Dorsolateral prefrontal cortex (tissue), 120 donors: ENCODE measurements at regions of chr15 and their contacts with region 1.

Region 1: GRCh38 chr15:42137431-42138261 is 18.8 kb downstream of the PLA2G4F start:
- DNase-seq: peak in 4 of 10 donors; percentile 5 to 38 (median 14)
- H3K4me3 ChIP-seq: no peak overlapping the region
- H3K27ac ChIP-seq: no peak overlapping the region
- H3K27me3 ChIP-seq: no peaks in the 10 kb centered on the region
- CTCF ChIP-seq: peak; percentile 45 to 79 (median 67)

Region 2: DNA sequence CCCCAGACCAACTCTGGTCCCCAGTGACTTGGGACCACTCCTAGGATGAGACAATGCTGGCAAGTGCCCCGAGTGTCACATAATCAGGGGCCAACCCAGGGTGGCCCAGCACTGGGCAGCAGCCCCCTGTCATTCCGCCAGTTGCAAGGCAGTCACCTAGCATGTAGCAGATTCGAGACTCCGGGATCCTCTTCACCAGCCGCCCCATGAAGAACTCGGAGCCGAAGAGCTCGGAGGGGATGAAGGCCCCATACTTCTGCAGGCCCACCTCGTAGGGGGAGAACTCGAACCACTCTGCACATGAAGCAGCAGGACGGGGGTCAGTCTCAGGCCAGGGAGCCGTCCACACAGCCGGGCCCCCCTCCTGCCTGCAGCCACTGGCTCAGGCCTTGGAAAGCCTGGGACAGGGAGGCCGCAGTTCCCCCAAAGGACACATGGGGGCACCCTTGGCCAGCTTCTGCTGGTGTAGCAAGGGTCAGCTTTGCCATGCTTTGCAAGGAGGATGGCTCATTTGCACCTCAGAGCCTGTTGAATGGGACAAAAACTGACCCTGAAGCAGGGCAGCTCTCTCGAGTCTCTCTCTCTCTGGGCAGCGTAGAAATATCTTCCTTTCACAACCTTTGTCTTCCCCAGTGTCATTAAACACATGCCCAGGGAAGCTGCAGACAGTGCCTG is 148.2 kb before region 1 on chr15:
- intact Hi-C with region 1: loop called in 1 of 2 experiments (anchors 2 kb)
- DNase-seq: peak; percentile 76 to 91 (median 84)
- H3K4me3 ChIP-seq: no peak overlapping the region
- H3K27ac ChIP-seq: no peak overlapping the region
- H3K27me3 ChIP-seq: peaks cover 0 to 3% (median 0%) of the 10 kb centered on the region in 45 donors
- CTCF ChIP-seq: peak; percentile 69 to 99 (median 96)

Region 3: GRCh38 chr15:42035435-42035761 is 102.2 kb before region 1 on chr15:
- intact Hi-C with region 1: no loop called
- DNase-seq: no peak
- H3K4me3 ChIP-seq: no peak overlapping the region
- H3K27ac ChIP-seq: no peak overlapping the region
- H3K27me3 ChIP-seq: peaks cover 0 to 10% (median 0%) of the 10 kb centered on the region in 45 donors
- CTCF ChIP-seq: no peak

Region 4: DNA sequence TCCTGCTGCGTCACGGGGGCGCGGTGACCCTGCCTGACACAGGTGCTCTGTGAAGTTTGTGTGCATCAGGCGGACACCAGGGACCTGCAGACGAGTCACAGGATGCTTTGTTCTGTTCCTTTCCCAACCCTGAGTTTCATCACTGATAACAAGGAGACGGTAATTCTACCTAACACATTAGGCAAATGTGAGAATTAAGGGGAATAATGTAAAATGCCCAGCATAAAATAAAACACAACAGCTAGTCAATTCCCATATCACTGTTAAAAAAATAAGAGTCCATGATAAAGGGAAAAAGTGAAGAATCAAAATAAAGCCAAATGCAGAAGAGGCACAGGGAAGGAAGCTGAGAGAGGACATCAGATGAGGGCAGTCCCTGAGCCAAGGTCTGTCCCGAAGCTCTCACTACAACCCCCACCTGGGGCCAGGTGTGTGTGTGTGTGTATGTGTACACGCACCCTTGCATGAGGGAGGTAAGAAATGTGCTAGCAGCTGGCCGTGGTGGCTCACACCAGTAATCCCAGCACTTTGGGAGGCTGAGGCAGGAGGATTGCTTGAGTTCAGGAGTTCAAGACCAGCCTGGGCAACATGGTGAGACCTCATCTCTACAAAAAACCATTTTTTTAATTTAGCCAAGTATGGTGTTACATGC is 70.8 kb before region 1 on chr15:
- intact Hi-C with region 1: loop called (anchors 2 kb)
- DNase-seq: no peak
- H3K4me3 ChIP-seq: no peak overlapping the region
- H3K27ac ChIP-seq: no peak overlapping the region
- H3K27me3 ChIP-seq: peaks cover 0 to 3% (median 0%) of the 10 kb centered on the region in 45 donors
- CTCF ChIP-seq: peak in 11 of 56 donors; percentile 1 to 45 (median 19)

Region 5: DNA sequence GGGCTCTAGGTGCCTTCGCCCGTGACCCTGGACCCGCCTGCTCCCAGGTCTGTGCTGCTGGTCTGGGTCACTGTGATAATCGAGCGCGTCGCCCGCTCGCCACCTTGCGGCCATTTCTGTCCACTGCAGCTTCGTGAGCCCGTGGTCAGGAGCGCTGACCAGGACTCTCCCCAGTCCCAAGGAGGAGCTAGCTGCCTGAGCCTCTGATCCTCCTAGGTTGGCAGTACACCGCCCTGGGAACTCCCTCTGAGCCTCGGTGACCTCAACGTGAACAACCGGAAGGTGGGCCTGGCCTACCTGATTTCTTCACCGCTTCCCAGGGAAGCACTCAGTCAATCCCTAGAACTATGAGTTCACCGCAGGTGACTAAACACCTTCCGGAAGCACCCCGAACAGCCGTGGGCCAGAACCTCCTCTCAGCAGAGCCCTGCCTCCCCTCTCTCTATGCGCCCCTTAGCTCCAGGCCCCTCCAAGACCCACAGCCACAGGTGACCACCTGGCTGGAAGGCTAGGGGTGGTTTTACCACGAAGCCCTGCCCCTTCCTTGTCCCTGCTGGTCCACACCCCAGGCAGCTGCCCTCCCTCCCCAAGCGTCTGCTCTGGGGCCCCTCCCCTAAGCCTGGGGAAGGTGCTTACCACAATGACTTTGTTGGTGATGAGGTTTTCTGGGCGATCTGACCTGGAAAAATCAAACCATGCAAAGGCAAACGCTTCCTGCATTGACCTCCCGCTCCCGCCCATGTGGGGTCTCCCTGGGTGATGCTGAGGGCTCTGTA is 53.0 kb before region 1 on chr15:
- intact Hi-C with region 1: loop called in 1 of 2 experiments (anchors 5 kb)
- DNase-seq: peak in 7 of 10 donors; percentile 40 to 74 (median 68)
- H3K4me3 ChIP-seq: peak overlapping the region in 1 of 59 donors; percentile 1
- H3K27ac ChIP-seq: no peak overlapping the region
- H3K27me3 ChIP-seq: peaks cover 0 to 12% (median 0%) of the 10 kb centered on the region in 45 donors
- CTCF ChIP-seq: peak; percentile 69 to 98 (median 93)